Activated T-helper 1 cell treated with anti-CD3 and anti-CD28 coated beads, Interleukin-12 subunit alpha, Interleukin-12 subunit beta, Interleukin-2, Interleukin-4 antibody, amounts not matched to agents 30 ng/mL and 10 ng/mL and 1 ng/mL, durations not matched to agents 14 hours and 24 hours and 36 hours (primary cell): ENCODE measurements at regions of chr3 and their contacts with region 1.

Region 1: DNA sequence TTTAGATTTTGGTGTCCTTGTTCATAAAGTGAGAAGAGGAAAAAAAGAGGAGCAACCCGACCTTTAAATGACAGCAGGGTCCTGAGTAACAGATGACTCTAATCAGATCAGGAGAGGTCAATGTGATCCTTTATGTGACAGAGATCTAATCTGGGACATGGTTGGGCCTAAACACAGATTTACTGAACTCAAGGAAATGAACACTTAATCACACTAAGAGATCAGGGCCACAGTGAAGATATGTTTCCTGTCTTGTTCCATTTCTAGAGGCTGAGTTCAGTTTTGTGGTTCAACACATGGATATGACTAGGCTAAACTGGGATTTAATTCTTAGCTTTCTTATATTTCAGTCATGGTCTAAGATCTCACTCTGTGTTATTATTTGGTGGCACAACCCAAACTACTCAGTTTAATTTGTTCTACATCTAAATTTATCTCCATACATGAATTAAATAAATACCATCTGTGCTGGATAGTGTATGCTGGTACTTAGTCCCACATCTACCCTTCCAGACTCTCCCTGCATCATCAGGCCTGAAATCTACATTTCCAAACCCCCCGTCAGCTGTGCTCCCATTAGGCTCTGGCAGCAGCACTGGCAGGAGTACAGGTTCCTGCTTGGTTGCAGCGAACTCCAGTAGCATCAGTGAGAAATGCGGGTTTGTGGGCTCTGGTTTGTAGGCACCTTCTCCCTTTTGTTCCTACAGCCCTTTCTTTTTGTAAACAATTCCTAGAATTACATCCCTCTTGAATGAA is 22.6 kb downstream of the SFMBT1 start:
- DNase-seq: no peak
- H3K4me3 Mint-ChIP-seq: no peak overlapping the region
- H3K27ac Mint-ChIP-seq: no peak overlapping the region
- H3K4me1 Mint-ChIP-seq: peaks cover 51% of the 10 kb centered on the region
- H3K27me3 Mint-ChIP-seq: peaks cover 1% of the 10 kb centered on the region

Region 2: GRCh38 chr3:52915294-52915693 is 108.0 kb before region 1 on chr3:
- intact Hi-C with region 1: no loop called
- DNase-seq: no peak
- H3K4me3 Mint-ChIP-seq: no peak overlapping the region
- H3K27ac Mint-ChIP-seq: no peak overlapping the region
- H3K4me1 Mint-ChIP-seq: peaks cover 4% of the 10 kb centered on the region
- H3K27me3 Mint-ChIP-seq: no peaks in the 10 kb centered on the region

Region 3: DNA sequence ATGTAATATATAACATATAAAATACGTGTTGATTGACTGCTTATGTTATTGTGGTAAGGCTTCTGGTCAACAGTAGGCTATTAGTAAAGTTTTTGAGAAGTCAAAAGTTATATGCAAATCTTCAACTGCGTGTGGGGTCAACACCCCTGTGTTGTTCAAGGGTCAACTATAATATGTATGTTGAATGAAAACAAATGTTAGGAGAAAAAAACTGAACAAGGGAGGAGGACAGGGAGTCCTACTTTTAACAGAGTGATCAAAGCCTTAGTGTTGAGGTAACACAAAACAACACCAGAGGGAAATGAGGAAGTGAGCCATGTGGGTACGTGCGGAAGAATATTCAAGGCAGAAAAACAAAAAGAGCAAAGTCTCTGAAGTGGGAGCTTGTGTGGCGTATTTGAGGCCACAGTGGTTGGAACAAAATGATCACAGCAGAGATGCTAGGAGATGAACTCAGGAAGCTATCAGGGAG is 39.9 kb before region 1 on chr3:
- intact Hi-C with region 1: loop called (anchors 5 kb)
- DNase-seq: peak; percentile 64
- H3K4me3 Mint-ChIP-seq: peak overlapping the region; percentile 38
- H3K27ac Mint-ChIP-seq: peak overlapping the region; percentile 85
- H3K4me1 Mint-ChIP-seq: peaks cover 23% of the 10 kb centered on the region
- H3K27me3 Mint-ChIP-seq: no peaks in the 10 kb centered on the region

Region 4: GRCh38 chr3:53009826-53010539 is 13.3 kb before region 1 on chr3:
- intact Hi-C with region 1: no loop called
- DNase-seq: no peak
- H3K4me3 Mint-ChIP-seq: no peak overlapping the region
- H3K27ac Mint-ChIP-seq: no peak overlapping the region
- H3K4me1 Mint-ChIP-seq: peaks cover 22% of the 10 kb centered on the region
- H3K27me3 Mint-ChIP-seq: no peaks in the 10 kb centered on the region

Region 5: DNA sequence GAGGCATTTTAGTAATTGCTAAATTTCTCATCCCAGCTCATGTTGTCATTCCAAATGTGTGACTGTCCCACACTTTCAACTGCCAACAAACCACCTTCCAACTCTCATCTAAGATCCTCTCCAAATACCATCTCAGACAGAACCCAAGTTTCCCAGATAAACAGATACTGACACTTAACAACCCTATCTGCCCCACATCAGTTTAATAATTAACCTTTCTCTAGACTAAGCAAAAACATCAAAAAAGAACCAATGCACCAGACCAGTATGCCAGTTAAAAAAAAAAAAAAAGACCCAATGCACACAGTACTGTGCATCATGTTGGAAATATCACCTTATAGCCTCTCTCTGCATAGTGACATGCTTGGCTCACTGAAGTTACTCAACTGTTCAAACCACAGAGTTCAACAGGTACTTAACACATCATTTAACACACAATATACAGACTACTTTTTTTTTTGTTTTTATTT is 17.1 kb after region 1 on chr3:
- intact Hi-C with region 1: loop called (anchors 1 kb)
- DNase-seq: no peak
- H3K4me3 Mint-ChIP-seq: no peak overlapping the region
- H3K27ac Mint-ChIP-seq: no peak overlapping the region
- H3K4me1 Mint-ChIP-seq: peaks cover 73% of the 10 kb centered on the region
- H3K27me3 Mint-ChIP-seq: peaks cover 2% of the 10 kb centered on the region

Region 6: GRCh38 chr3:53748512-53749271 is 725.4 kb after region 1 on chr3:
- intact Hi-C with region 1: no loop called
- DNase-seq: no peak
- H3K4me3 Mint-ChIP-seq: no peak overlapping the region
- H3K27ac Mint-ChIP-seq: no peak overlapping the region
- H3K4me1 Mint-ChIP-seq: peaks cover 30% of the 10 kb centered on the region
- H3K27me3 Mint-ChIP-seq: peaks cover 16% of the 10 kb centered on the region